ENCODE measurements at regions of chr6 and their contacts with region 1.

Region 1: DNA sequence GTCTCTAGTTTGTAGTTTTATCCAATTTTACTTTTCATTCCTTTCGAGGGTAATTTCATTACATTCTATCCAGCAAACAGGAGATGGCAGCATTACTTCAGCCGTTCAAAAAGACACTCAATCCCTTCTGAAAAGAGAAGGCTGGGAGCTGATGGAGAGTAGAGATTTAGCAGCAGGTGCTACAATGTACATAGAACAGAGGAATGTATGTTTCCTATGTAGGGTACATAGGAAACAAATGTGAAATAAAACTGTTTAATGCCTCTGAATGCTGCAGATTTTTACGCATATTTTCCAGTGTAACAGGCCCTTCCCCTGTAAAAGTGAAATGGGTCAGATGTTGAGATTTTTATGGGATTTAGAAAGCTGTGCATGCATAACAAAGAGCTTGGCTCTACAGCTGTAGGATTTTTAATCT is 16.0 kb downstream of the RPS12 start:
- DNase-seq: peak; percentile 34
- H3K4me3 ChIP-seq: no peak overlapping the region
- H3K27ac ChIP-seq: no peak overlapping the region
- H3K4me1 ChIP-seq: no peaks in the 10 kb centered on the region
- H3K27me3 ChIP-seq: no peaks in the 10 kb centered on the region
- CTCF ChIP-seq: peak in 1 of 2 donors; percentile 18
- POLR2A ChIP-seq: no peak

Region 2: DNA sequence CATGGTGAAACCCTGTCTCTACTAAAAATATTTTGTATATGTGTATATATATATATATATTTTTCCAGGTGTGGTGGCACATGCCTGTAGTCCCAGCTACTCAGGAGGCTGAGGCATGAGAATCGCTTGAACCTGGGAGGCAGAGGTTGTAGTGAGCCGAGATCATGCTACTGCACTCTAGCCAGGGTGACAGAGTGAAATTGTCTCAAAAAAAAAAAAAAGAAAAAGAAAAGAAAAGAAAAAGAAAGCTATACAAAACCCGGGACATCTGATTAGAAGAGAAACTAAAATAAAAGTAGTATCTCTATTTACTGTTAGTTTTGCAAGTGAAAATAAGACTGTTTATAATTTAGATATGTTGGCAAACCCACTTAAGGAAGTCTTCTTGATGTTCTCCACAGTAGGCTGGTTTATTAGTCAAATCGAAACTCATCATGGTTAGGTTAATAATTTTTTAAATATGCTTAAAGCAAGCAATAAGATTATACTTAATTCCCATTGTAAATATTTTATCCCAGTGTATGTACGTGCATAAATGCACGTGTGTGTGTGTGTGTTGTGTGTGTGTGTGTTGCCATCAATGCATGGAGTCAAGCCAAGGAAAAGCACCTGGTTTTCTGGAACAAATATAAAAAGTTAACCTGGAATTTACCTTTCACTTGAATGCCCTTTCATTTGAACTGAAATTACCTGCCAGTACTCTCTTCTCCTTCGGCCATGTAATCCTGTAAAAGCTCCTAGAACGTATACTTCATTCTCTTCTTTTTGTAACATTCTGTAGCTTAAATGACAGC is 79.7 kb before region 1 on chr6:
- CTCF ChIA-PET with region 1: no interaction called
- POLR2A ChIA-PET with region 1: no interaction called
- dilution Hi-C with region 1: no loop called
- intact Hi-C with region 1: no loop called
- DNase-seq: no peak
- H3K4me3 ChIP-seq: no peak overlapping the region
- H3K27ac ChIP-seq: no peak overlapping the region
- H3K4me1 ChIP-seq: no peaks in the 10 kb centered on the region
- H3K27me3 ChIP-seq: no peaks in the 10 kb centered on the region
- CTCF ChIP-seq: no peak
- POLR2A ChIP-seq: no peak

Region 3: DNA sequence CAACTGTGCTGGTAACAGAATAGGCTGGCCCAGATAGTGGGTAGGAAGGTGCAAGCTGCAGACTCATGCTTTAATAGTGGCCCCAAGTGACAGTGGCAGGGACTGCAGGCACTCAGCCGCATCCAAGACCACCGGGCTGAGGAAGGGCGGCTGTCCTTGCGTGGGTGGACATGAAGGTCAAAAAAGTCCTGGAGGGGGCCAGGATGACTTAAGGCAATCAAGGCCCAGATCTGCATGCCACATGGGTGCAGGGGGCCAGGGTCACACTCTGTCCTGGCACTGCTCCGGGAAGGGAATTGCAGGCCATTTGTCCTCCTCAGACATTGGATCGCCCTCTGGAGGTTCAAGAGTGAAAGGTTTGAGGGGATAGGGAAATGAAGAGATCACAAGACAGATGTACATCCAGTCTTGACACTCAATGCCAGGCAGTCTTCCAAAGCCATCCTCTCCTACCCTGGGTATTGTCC is 62.3 kb before region 1 on chr6:
- CTCF ChIA-PET with region 1: no interaction called
- POLR2A ChIA-PET with region 1: no interaction called
- dilution Hi-C with region 1: no loop called
- intact Hi-C with region 1: no loop called
- DNase-seq: peak; percentile 32
- H3K4me3 ChIP-seq: no peak overlapping the region
- H3K27ac ChIP-seq: no peak overlapping the region
- H3K4me1 ChIP-seq: no peaks in the 10 kb centered on the region
- H3K27me3 ChIP-seq: peaks cover 0 to 3% of the 10 kb centered on the region in 2 experiments
- CTCF ChIP-seq: peak; percentile 16 to 21
- POLR2A ChIP-seq: no peak

Region 4: DNA sequence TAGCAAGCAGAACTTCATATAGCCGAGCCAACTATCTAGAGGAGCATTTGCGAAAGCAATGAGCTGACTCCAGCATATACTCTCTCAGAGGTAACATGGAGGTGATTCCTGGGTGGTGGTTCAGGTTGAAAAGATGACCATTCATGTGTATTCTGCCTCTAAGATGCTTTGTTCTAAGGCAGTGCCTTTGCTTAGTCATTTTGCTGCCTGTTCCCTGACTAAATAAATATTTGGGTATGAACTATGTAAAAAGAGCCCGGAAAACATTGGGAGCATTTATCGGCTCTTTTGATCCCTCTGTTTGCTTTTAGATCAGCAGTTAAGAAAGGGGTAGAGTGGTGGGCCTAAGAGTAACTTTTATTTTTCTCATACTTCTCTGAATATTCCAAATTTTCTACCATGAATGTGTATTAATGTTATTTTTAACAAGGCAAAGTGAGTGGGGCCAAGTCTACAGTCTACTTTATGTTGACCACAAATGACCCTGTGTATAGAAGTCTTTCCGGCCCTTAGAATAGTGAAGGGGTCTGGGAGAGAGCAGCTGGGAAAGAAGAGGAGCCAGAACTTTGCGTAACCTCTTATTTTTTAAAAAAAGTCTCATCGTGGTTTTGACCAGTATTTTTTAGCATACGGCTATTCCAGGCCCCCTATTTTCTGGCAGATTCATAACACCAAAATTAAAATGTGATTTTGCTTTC is 204.3 kb after region 1 on chr6:
- CTCF ChIA-PET with region 1: no interaction called
- POLR2A ChIA-PET with region 1: no interaction called
- dilution Hi-C with region 1: no loop called
- intact Hi-C with region 1: loop called (anchors 5 kb)
- DNase-seq: no peak
- H3K4me3 ChIP-seq: no peak overlapping the region
- H3K27ac ChIP-seq: no peak overlapping the region
- H3K4me1 ChIP-seq: no peaks in the 10 kb centered on the region
- H3K27me3 ChIP-seq: no peaks in the 10 kb centered on the region
- CTCF ChIP-seq: no peak
- POLR2A ChIP-seq: no peak

Region 5: DNA sequence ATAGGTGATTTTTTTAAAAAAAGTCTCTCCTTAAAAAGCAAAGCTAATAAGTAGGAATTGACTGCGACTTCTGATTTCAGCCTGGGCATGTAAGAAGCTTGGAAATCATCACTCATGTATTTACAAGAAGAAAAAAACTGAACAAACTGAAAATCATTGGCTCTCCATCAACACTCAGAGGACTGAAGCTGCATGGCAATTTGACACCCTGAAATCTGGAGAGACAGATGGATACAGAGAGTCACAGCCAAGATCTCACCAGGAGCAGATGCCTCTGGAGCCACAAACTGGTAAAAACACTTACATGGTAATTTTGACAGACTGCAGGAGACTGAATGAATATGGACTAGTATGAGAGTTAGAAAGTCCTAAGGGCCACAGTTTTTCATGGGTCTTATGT is 867.3 kb after region 1 on chr6:
- CTCF ChIA-PET with region 1: no interaction called
- POLR2A ChIA-PET with region 1: no interaction called
- dilution Hi-C with region 1: no loop called
- intact Hi-C with region 1: no loop called
- DNase-seq: no peak
- H3K4me3 ChIP-seq: no peak overlapping the region
- H3K27ac ChIP-seq: no peak overlapping the region
- H3K4me1 ChIP-seq: no peaks in the 10 kb centered on the region
- H3K27me3 ChIP-seq: no peaks in the 10 kb centered on the region
- CTCF ChIP-seq: no peak
- POLR2A ChIP-seq: no peak